ENCODE measurements at regions of chr1 and their contacts with region 1.

Region 1: GRCh38 chr1:116806245-116806644 is 52.0 kb downstream of the CD2 start:
- DNase-seq: peak; percentile 92
- ATAC-seq: peak; percentile 68
- H3K4me3 Mint-ChIP-seq: peak overlapping the region; percentile 85
- H3K27ac Mint-ChIP-seq: peak overlapping the region; percentile 94
- H3K4me1 Mint-ChIP-seq: peaks cover 85% of the 10 kb centered on the region
- H3K27me3 Mint-ChIP-seq: no peaks in the 10 kb centered on the region

Region 2: GRCh38 chr1:116310180-116310579 is 496.1 kb before region 1 on chr1:
- CTCF ChIA-PET with region 1: no interaction called
- POLR2A ChIA-PET with region 1: no interaction called
- intact Hi-C with region 1: no loop called
- DNase-seq: no peak
- ATAC-seq: no peak
- H3K4me3 Mint-ChIP-seq: no peak overlapping the region
- H3K27ac Mint-ChIP-seq: no peak overlapping the region
- H3K4me1 Mint-ChIP-seq: peaks cover 21% of the 10 kb centered on the region
- H3K27me3 Mint-ChIP-seq: no peaks in the 10 kb centered on the region

Region 3: GRCh38 chr1:116754198-116754977 is 51.9 kb before region 1 on chr1 and contains the start of gene CD2:
- CTCF ChIA-PET with region 1: interaction called, 3 read pairs
- POLR2A ChIA-PET with region 1: interaction called, 17 read pairs
- intact Hi-C with region 1: no loop called
- DNase-seq: peak; percentile 80
- ATAC-seq: peak; percentile 80
- H3K4me3 Mint-ChIP-seq: peak within 1 kb of the TSS; percentile 93
- H3K27ac Mint-ChIP-seq: peak within 1 kb of the TSS; percentile 100
- H3K4me1 Mint-ChIP-seq: peaks cover 41% of the 10 kb centered on the region
- H3K27me3 Mint-ChIP-seq: no peaks in the 10 kb centered on the region
- total RNA-seq, gene CD2: 287 to 291 TPM

Region 4: DNA sequence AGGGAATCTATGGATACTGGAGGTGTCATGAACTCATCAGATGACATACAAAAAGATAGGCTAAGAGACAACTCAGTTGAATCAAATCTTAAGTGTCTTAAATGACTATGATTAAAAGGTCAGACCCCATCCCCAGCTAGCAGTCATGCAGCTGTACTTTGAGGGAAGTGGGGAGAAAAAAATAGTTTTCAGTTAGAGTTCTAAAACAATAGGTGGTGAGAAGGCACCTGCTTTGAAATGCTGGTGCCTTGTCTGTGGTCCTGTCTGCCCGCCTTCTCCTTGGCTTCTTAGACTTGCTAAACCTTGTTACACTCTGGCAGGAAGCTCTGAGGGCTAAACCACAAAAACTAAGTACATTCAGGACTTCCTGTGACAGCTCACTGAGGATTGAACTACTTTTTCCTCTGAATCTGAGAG is 36.7 kb before region 1 on chr1:
- CTCF ChIA-PET with region 1: interaction called, 14 read pairs
- POLR2A ChIA-PET with region 1: interaction called, 72 read pairs
- intact Hi-C with region 1: loop called (anchors 1 to 2 kb)
- DNase-seq: peak; percentile 86
- ATAC-seq: peak; percentile 53
- H3K4me3 Mint-ChIP-seq: peak overlapping the region; percentile 93
- H3K27ac Mint-ChIP-seq: peak overlapping the region; percentile 100
- H3K4me1 Mint-ChIP-seq: peaks cover 96% of the 10 kb centered on the region
- H3K27me3 Mint-ChIP-seq: no peaks in the 10 kb centered on the region

Region 5: GRCh38 chr1:117106478-117106877 is 300.2 kb after region 1 on chr1:
- CTCF ChIA-PET with region 1: no interaction called
- POLR2A ChIA-PET with region 1: no interaction called
- intact Hi-C with region 1: no loop called
- DNase-seq: peak; percentile 26
- ATAC-seq: peak; percentile 76
- H3K4me3 Mint-ChIP-seq: no peak overlapping the region
- H3K27ac Mint-ChIP-seq: no peak overlapping the region
- H3K4me1 Mint-ChIP-seq: peaks cover 21% of the 10 kb centered on the region
- H3K27me3 Mint-ChIP-seq: no peaks in the 10 kb centered on the region

Measured in activated CD4-positive, alpha-beta T cell treated with anti-CD3 and anti-CD28 coated beads for 36 hours (primary cell).